MCF 10A (cell line): ENCODE measurements at regions of chr16 and their contacts with region 1.

Region 1: DNA sequence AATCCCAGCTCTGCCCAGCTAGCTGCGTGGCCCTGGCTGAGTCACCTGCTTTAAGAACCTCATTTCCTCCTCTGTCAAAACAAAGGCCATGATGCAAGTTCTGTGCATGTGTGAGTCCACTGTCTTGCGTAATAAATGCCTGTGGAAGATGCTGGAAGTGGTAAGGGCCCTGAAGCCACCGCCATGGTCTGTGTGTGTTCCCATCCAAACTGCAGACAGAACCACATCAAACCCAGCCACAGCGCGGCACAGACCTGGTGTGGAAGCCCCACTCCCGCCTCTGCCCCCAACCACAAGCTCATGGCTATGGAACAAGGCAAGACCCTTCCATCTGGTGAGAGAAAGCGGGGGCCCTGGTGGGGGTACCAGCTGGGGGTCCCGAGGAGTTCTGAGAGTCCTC is 26.0 kb downstream of the NECAB2 start:
- DNase-seq: peak; percentile 96
- H3K4me3 Mint-ChIP-seq: no peak overlapping the region
- H3K27ac Mint-ChIP-seq: peak overlapping the region; percentile 89
- H3K4me1 Mint-ChIP-seq: peaks cover 34% of the 10 kb centered on the region
- H3K27me3 Mint-ChIP-seq: peaks cover 7% of the 10 kb centered on the region
- CTCF ChIP-seq: no peak

Region 2: DNA sequence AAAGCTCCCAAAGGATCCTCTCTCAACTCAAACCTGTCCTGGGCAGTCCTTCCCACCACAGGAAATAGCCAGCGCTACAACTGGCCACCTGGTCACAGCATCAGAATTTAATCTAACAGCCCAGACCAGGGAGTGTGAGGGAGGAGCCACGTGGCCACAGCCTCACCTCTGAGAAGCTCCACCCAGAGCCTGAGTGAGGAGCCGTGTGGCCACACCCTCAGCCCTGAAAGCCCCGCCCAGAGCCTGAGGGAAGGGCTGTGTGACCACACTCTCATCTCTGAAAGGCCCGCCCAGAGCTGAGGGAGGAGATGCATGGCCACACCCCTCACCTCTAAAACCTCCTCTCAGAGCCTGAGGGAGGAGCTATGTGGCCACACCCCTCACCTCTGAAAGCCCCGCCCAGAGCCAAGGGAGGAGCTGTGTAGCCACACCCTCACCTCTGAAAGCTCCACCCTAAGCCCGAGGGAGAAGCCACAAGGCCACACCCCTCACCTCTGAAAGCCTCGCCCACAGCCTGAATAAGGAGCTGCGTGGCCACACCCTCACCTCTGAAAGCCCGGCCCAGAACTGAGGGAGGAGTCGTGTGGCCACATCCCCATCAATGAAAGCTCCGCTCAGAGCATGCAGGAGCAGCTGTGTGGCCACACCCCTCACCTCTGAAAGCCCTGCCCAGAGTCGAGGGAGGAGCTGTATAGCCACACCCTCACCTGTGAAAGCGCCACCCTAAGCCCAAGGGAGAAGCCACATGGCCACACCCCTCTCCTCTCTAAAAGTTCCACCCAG is 19.9 kb after region 1 on chr16:
- CTCF ChIA-PET with region 1: interaction called, 5 read pairs
- POLR2A ChIA-PET with region 1: interaction called, 18 read pairs
- intact Hi-C with region 1: no loop called
- DNase-seq: peak; percentile 98
- H3K4me3 Mint-ChIP-seq: no peak overlapping the region
- H3K27ac Mint-ChIP-seq: peak overlapping the region; percentile 63
- H3K4me1 Mint-ChIP-seq: peaks cover 5% of the 10 kb centered on the region
- H3K27me3 Mint-ChIP-seq: no peaks in the 10 kb centered on the region
- CTCF ChIP-seq: no peak